HepG2 (cell line): ENCODE measurements at regions of chr3 and their contacts with region 1.

Region 1: DNA sequence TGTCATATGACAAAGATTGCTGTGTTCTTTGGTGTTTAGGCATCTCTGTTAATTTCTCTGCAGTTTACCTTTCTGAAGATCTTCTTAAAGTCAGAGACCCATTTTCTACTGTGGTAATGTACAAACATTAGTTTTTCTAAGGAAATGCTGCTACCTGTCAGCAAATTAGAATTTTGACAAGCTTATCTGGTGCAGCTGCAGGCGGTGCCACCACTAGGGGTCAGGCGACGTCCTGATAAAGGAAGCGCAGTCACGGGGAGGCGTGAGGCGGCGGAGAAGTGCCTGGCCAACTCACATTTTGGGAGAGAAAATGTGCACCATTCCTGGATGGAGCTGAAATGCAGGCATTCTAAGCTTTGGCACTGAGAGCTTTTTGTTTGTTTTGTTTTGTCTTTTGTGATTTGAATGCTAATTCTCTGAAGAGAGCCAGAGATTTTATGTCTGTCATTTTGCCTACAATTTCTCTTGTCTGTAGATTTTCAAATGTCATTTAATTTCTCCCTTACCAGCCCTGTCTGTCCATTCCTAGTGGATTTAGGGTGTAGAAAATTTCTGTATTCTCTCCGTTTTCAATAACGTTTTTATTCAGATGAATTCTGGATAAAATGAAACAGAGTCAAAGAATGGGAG is 24.9 kb upstream of the SIAH2 start:
- DNase-seq: peak; percentile 53
- ATAC-seq: peak; percentile 95
- H3K4me3 ChIP-seq: no peak overlapping the region
- H3K27ac ChIP-seq: no peak overlapping the region
- H3K4me1 ChIP-seq: peaks cover 7% of the 10 kb centered on the region; the same call in 1 of the 2 replicates
- H3K27me3 ChIP-seq: peaks cover 2 to 10% of the 10 kb centered on the region in 2 experiments; a peak in 2 of 5 replicates
- CTCF ChIP-seq: peak; percentile 94
- EP300 ChIP-seq: no peak
- POLR2A ChIP-seq: no peak
- RAD21 ChIP-seq: peak; percentile 78

Region 2: GRCh38 chr3:150830094-150830681 is 42.3 kb after region 1 on chr3:
- CTCF ChIA-PET with region 1: interaction called, 8 read pairs
- POLR2A ChIA-PET with region 1: no interaction called
- in situ Hi-C with region 1: loop called (anchors 10 kb)
- intact Hi-C with region 1: loop called (anchors 5 kb)
- DNase-seq: peak; percentile 41
- ATAC-seq: peak; percentile 96
- H3K4me3 ChIP-seq: no peak overlapping the region; a peak in 1 of 6 replicates
- H3K27ac ChIP-seq: no peak overlapping the region
- H3K4me1 ChIP-seq: peaks cover 15% of the 10 kb centered on the region; the same call in 1 of the 2 replicates
- H3K27me3 ChIP-seq: peaks cover 0 to 1% of the 10 kb centered on the region in 2 experiments; a peak in 2 of 5 replicates
- CTCF ChIP-seq: peak; percentile 57
- EP300 ChIP-seq: no peak
- POLR2A ChIP-seq: no peak
- RAD21 ChIP-seq: peak; percentile 43